Heart right ventricle (tissue), 16 donors: ENCODE measurements at regions of chr22 and their contacts with region 1.

Region 1: GRCh38 chr22:37338539-37339246 is 56.4 kb downstream of the CYTH4 start:
- DNase-seq: no peak
- ATAC-seq: no peak
- H3K4me3 ChIP-seq: no peak overlapping the region
- H3K27ac ChIP-seq: no peak overlapping the region
- H3K4me1 ChIP-seq: peaks cover 0 to 9% (median 0%) of the 10 kb centered on the region in 9 donors
- H3K27me3 ChIP-seq: peaks cover 7 to 95% (median 84%) of the 10 kb centered on the region in 7 donors
- CTCF ChIP-seq: no peak

Region 2: DNA sequence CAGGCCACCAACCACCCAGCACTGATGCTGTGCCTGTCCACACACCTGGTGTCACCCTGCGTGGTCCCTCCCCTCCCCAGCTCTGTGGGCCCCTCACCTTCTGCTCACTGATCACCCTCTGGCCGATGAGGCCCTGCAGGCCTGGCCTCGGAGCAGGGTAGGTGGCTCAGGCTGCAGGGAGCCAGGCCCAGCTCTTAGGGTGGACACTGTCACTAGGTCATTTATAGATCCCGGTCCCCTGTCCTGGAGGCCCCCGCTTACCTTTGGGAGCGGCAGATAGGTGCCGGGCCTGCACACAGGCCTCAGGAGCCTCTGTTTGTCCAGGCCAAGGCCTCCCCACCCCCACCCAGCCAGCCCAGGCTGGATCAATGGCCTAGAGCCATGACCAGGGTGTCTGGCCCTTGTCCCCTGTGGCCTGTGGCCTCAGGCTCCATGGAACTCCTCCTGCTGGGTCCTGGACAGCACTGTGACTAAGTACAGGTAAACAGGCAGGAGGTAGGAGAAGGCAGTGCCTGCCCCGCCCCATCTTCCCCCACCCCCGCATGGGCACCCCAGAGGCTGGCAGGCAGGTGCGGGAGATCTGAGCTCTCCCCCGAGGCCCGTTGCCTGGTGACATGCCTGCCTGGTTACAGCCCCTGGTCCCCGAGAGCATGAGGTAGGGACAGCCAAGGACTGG is 229.3 kb before region 1 on chr22 and contains the start of gene TMPRSS6:
- intact Hi-C with region 1: no loop called
- DNase-seq: no peak
- ATAC-seq: no peak
- H3K4me3 ChIP-seq: no peak within 1 kb of the TSS
- H3K27ac ChIP-seq: no peak within 1 kb of the TSS
- H3K4me1 ChIP-seq: no peaks in the 10 kb centered on the region
- H3K27me3 ChIP-seq: peaks cover 0 to 44% (median 16%) of the 10 kb centered on the region in 7 donors
- CTCF ChIP-seq: no peak
- total RNA-seq, gene TMPRSS6: not detected

Region 3: GRCh38 chr22:37295946-37296345 is 42.7 kb before region 1 on chr22:
- intact Hi-C with region 1: loop called in 1 of 10 experiments (anchors 2 kb)
- DNase-seq: no peak
- ATAC-seq: peak in 2 of 8 donors; percentile 5 to 12
- H3K4me3 ChIP-seq: no peak overlapping the region
- H3K27ac ChIP-seq: no peak overlapping the region
- H3K4me1 ChIP-seq: peaks cover 0 to 57% (median 0%) of the 10 kb centered on the region in 9 donors
- H3K27me3 ChIP-seq: peaks cover 0 to 51% (median 24%) of the 10 kb centered on the region in 7 donors
- CTCF ChIP-seq: no peak

Region 4: GRCh38 chr22:37362621-37363020 is 23.9 kb after region 1 on chr22:
- intact Hi-C with region 1: no loop called
- DNase-seq: no peak
- ATAC-seq: no peak
- H3K4me3 ChIP-seq: no peak overlapping the region
- H3K27ac ChIP-seq: no peak overlapping the region
- H3K4me1 ChIP-seq: peaks cover 0 to 10% (median 0%) of the 10 kb centered on the region in 9 donors
- H3K27me3 ChIP-seq: peaks cover 0 to 21% (median 4%) of the 10 kb centered on the region in 7 donors
- CTCF ChIP-seq: no peak

Region 5: GRCh38 chr22:37533995-37534394 is 195.3 kb after region 1 on chr22:
- intact Hi-C with region 1: no loop called
- DNase-seq: no peak
- ATAC-seq: no peak
- H3K4me3 ChIP-seq: no peak overlapping the region
- H3K27ac ChIP-seq: no peak overlapping the region
- H3K4me1 ChIP-seq: peaks cover 0 to 17% (median 6%) of the 10 kb centered on the region in 9 donors
- H3K27me3 ChIP-seq: peaks cover 0 to 2% (median 0%) of the 10 kb centered on the region in 7 donors
- CTCF ChIP-seq: no peak